Mammary epithelial cell (primary cell): ENCODE measurements at regions of chr3 and their contacts with region 1.

Region 1: GRCh38 chr3:107690522-107691138 is 167.9 kb downstream of the BBX start:
- DNase-seq: peak; percentile 31
- H3K4me3 ChIP-seq: no peak overlapping the region
- H3K27ac ChIP-seq: no peak overlapping the region
- H3K4me1 ChIP-seq: peaks cover 5% of the 10 kb centered on the region
- H3K27me3 ChIP-seq: no peaks in the 10 kb centered on the region
- CTCF ChIP-seq: peak; percentile 48 to 53

Region 2: GRCh38 chr3:107468802-107469201 is 221.8 kb before region 1 on chr3:
- CTCF ChIA-PET with region 1: no interaction called
- dilution Hi-C with region 1: no loop called
- in situ Hi-C with region 1: no loop called
- intact Hi-C with region 1: no loop called
- DNase-seq: no peak
- H3K4me3 ChIP-seq: no peak overlapping the region
- H3K27ac ChIP-seq: no peak overlapping the region
- H3K4me1 ChIP-seq: no peaks in the 10 kb centered on the region
- H3K27me3 ChIP-seq: no peaks in the 10 kb centered on the region
- CTCF ChIP-seq: no peak

Region 3: DNA sequence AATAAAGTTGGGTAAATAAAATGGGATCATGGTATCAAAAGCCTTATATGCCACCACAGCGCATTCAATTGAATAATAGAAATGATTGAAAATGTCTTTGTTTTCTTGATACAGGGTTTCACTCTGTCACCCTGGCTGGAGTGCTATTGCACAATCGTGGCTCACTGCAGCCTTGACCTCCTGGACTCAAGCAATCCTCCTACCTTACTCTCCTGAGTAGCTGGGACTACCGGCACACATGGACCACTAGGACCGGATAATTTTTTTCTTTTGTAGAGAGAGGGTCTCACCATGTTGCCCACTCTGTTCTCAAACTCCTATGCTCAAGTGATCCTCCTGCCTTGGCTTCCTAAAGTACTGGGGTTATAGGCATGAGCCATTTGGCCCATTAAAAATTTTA is 201.7 kb before region 1 on chr3:
- CTCF ChIA-PET with region 1: no interaction called
- dilution Hi-C with region 1: no loop called
- in situ Hi-C with region 1: no loop called
- intact Hi-C with region 1: no loop called
- DNase-seq: no peak
- H3K4me3 ChIP-seq: no peak overlapping the region
- H3K27ac ChIP-seq: no peak overlapping the region
- H3K4me1 ChIP-seq: no peaks in the 10 kb centered on the region
- H3K27me3 ChIP-seq: peaks cover 5% of the 10 kb centered on the region
- CTCF ChIP-seq: no peak

Region 4: DNA sequence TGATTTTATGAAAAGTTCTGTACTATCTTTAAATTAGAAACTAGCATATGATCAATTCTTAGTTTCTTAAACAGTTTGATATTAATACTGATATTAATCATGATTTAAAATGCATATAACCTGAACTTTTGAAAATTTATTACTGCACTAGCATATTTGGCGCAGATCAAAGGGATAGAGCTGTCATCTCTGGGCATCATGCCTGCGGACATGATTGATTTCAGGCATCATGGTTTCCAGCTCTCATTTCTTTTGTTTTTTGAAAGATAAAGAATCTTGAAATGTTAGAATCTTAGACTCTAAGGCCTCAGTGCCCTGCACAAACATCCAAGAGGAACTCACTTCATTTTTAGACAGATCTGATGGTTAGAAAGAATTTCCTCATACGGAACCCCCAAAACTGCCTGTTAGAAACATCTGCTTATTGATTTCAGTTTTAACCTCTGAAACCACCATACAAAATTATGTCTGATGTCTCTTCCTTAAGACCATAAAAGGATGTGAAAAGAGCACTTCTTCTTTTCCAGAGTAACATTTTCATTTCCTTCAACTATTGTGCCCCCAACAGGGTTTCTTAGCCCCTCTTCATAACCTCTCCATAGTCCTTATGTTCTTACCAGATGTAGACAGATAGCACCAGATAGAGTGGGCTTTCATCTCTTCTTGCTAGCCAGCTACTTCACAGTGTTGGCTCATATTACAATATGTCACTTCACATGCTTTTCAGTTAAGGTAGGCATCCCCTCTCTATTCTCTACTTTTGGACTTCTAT is 57.1 kb before region 1 on chr3:
- CTCF ChIA-PET with region 1: no interaction called
- dilution Hi-C with region 1: no loop called
- in situ Hi-C with region 1: no loop called
- intact Hi-C with region 1: no loop called
- DNase-seq: no peak
- H3K4me3 ChIP-seq: no peak overlapping the region
- H3K27ac ChIP-seq: no peak overlapping the region
- H3K4me1 ChIP-seq: no peaks in the 10 kb centered on the region
- H3K27me3 ChIP-seq: no peaks in the 10 kb centered on the region
- CTCF ChIP-seq: no peak

Region 5: GRCh38 chr3:107727102-107727501 is 36.5 kb after region 1 on chr3:
- CTCF ChIA-PET with region 1: no interaction called
- dilution Hi-C with region 1: loop called (anchors 5 kb)
- in situ Hi-C with region 1: no loop called
- intact Hi-C with region 1: no loop called
- DNase-seq: no peak
- H3K4me3 ChIP-seq: no peak overlapping the region
- H3K27ac ChIP-seq: no peak overlapping the region
- H3K4me1 ChIP-seq: no peaks in the 10 kb centered on the region
- H3K27me3 ChIP-seq: no peaks in the 10 kb centered on the region
- CTCF ChIP-seq: no peak

Region 6: DNA sequence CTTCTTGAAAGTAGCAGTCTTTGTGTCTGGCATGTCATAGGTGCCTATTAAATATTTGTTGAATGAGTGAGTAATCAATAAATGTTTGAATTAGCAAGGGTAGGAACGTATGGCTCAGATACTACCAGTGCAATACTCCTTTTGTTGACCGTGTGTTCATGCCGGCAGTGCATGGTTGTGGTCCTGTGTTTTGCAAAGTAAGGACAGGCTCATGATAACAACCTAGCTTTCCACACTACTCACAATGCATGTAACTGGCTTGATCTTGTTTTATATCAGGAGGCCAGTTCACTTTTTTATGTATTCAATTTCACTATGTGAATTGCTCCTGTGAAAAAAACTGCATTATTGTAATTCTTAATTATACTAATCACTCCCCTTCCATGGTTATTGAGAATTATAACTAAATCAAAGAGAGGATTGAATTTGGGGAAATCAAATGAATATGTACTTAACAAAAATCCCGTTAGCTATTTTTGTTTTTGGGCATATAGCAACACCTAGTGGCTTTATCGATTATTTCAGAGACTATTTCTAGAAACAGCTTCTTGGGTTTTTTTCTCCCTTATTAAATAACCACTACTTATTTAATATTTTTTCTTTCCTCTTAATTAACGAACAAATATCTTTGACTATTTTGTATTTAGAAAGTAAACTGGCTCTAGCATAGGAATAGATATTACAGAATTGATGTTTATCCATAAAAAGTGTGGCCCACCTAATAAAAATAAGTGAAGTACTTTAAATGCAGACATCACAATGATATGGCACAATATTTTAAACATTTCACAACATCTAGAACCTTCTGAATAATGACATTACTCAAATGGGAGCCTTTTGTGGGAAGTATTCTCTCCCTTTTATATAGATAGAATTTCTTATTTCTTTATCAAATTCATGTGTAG is 50.6 kb after region 1 on chr3:
- CTCF ChIA-PET with region 1: no interaction called
- dilution Hi-C with region 1: no loop called
- in situ Hi-C with region 1: no loop called
- intact Hi-C with region 1: loop called (anchors 1 kb)
- DNase-seq: peak; percentile 11
- H3K4me3 ChIP-seq: no peak overlapping the region
- H3K27ac ChIP-seq: no peak overlapping the region
- H3K4me1 ChIP-seq: no peaks in the 10 kb centered on the region
- H3K27me3 ChIP-seq: no peaks in the 10 kb centered on the region
- CTCF ChIP-seq: peak; percentile 43 to 47